GM10248 (cell line): ENCODE measurements at regions of chr14 and their contacts with region 1.

Region 1: GRCh38 chr14:87944987-87945604 is 47.9 kb downstream of the GALC start:
- DNase-seq: peak; percentile 5
- CTCF ChIP-seq: peak; percentile 44

Region 2: DNA sequence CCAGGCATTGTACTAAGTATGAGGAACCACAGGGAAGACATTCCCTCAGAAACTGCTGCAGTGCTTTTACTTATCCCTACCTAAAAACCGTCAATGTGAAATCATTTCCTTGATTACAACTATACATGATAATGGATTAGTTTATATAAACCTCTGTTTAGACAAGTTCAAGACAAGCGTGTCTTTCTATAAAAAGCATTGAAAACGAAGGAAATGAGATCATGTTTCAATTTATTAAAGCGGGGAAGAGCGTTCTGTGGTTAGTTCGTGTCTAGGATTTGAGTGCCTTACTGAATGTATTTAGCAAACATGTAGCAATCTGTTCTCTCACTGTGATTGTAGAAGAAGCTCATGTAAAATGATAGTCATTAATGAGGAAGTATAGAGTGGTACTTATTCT is 10.4 kb after region 1 on chr14:
- CTCF ChIA-PET with region 1: interaction called, 23 read pairs
- POLR2A ChIA-PET with region 1: no interaction called
- DNase-seq: no peak
- CTCF ChIP-seq: no peak

Region 3: GRCh38 chr14:87994974-87995373 is 49.9 kb after region 1 on chr14:
- CTCF ChIA-PET with region 1: interaction called, 10 read pairs
- POLR2A ChIA-PET with region 1: no interaction called
- DNase-seq: peak; percentile 28
- CTCF ChIP-seq: no peak

Region 4: GRCh38 chr14:88013750-88014349 is 68.8 kb after region 1 on chr14:
- CTCF ChIA-PET with region 1: interaction called, 30 read pairs
- POLR2A ChIA-PET with region 1: no interaction called
- DNase-seq: peak; percentile 40
- CTCF ChIP-seq: peak; percentile 68

Region 5: DNA sequence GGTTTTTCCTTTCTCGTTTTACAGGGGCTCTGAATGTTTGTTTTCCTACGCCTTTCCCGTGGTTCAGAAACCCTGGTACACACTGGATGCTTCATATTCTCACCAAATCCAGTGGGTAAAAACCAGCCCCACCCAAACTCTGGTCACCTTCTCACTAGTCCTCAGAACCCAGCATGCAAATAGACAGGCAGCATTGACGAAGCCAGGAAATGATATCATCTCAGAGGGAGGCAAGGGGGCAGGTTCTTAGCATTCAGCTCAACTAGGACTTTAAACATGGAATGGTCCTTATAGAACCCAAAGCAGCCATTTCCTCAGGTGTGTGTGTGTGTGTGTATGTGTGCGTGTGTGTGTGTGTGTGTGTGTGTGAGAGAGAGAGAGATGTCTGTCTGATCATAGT is 236.0 kb after region 1 on chr14:
- CTCF ChIA-PET with region 1: interaction called, 11 read pairs
- POLR2A ChIA-PET with region 1: no interaction called
- DNase-seq: no peak
- CTCF ChIP-seq: no peak

Region 6: GRCh38 chr14:88233915-88234314 is 288.8 kb after region 1 on chr14:
- CTCF ChIA-PET with region 1: interaction called, 18 read pairs
- POLR2A ChIA-PET with region 1: no interaction called
- DNase-seq: no peak
- CTCF ChIP-seq: peak; percentile 20